Activated CD4-positive, alpha-beta memory T cell treated with anti-CD3 and anti-CD28 coated beads for 36 hours (primary cell): ENCODE measurements at regions of chr10 and their contacts with region 1.

Region 1: GRCh38 chr10:7192831-7193361 is 217.9 kb downstream of the SFMBT2 start:
- DNase-seq: peak; percentile 77
- H3K4me3 Mint-ChIP-seq: peak overlapping the region; percentile 61
- H3K27ac Mint-ChIP-seq: peak overlapping the region; percentile 95
- H3K4me1 Mint-ChIP-seq: peaks cover 54% of the 10 kb centered on the region
- H3K27me3 Mint-ChIP-seq: no peaks in the 10 kb centered on the region

Region 2: GRCh38 chr10:7157091-7157490 is 35.8 kb before region 1 on chr10:
- CTCF ChIA-PET with region 1: no interaction called
- POLR2A ChIA-PET with region 1: no interaction called
- intact Hi-C with region 1: loop called (anchors 5 kb)
- DNase-seq: no peak
- H3K4me3 Mint-ChIP-seq: no peak overlapping the region
- H3K27ac Mint-ChIP-seq: no peak overlapping the region
- H3K4me1 Mint-ChIP-seq: peaks cover 17% of the 10 kb centered on the region
- H3K27me3 Mint-ChIP-seq: no peaks in the 10 kb centered on the region